Activated CD8-positive, alpha-beta T cell treated with anti-CD3 and anti-CD28 coated beads, Interleukin-2, amount 10 ng/mL, durations not matched to agents 7 days and 5 days (primary cell): ENCODE measurements at regions of chr12 and their contacts with region 1.

Region 1: GRCh38 chr12:102939670-102940222 is 17.7 kb upstream of the ASCL1 start:
- DNase-seq: no peak
- ATAC-seq: no peak
- H3K4me3 Mint-ChIP-seq: no peak overlapping the region
- H3K27ac Mint-ChIP-seq: no peak overlapping the region
- H3K4me1 Mint-ChIP-seq: no peaks in the 10 kb centered on the region
- H3K27me3 Mint-ChIP-seq: peaks cover 16% of the 10 kb centered on the region

Region 2: GRCh38 chr12:102883204-102883799 is 56.4 kb before region 1 on chr12:
- CTCF ChIA-PET with region 1: interaction called, 10 read pairs
- POLR2A ChIA-PET with region 1: no interaction called
- DNase-seq: peak; percentile 39
- ATAC-seq: peak; percentile 47
- H3K4me3 Mint-ChIP-seq: no peak overlapping the region
- H3K27ac Mint-ChIP-seq: no peak overlapping the region
- H3K4me1 Mint-ChIP-seq: no peaks in the 10 kb centered on the region
- H3K27me3 Mint-ChIP-seq: peaks cover 5% of the 10 kb centered on the region

Region 3: GRCh38 chr12:102980350-102980749 is 40.6 kb after region 1 on chr12:
- CTCF ChIA-PET with region 1: no interaction called
- POLR2A ChIA-PET with region 1: no interaction called
- DNase-seq: no peak
- ATAC-seq: no peak
- H3K4me3 Mint-ChIP-seq: no peak overlapping the region
- H3K27ac Mint-ChIP-seq: no peak overlapping the region
- H3K4me1 Mint-ChIP-seq: no peaks in the 10 kb centered on the region
- H3K27me3 Mint-ChIP-seq: peaks cover 14% of the 10 kb centered on the region